ENCODE measurements at regions of chr1 and their contacts with region 1.

Region 1: DNA sequence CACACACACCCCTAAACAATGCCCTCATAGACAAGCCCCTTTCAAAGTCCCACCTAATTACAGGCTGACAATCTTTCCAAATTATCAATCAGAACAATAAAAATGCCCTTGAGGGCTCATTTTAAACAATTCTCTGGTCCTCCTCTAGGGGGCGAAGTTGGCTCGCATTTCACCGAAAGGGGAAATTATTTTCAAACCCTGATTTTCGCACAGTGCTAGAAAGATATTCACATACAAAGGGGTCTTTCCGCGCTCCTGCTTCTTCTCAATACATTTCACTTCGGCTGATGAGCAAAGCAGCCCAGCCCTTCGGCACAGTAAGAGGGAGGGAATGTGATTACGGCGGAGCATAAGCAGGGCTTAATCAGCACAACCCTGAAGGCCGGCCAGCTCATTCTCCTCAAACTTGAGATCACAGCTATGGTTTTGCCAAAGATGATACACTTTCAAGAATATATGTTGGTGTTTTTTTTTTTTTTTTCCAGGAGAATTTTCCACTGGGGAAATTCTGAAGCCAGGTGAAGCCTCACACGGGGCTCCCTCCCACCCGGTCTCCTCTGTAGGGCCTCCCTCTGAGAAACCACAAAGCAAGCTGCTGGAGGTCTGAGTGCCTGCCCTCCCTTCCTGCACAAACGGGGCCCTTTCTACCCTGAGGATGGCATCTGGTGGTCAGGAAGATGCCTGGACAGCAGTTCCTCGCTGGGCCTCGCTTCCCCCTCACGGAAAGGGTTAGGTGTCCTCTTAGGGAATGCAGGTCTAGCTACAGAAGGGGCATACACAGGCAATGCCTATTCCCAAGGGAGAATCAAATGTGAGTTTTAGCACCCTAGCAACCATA is 66.9 kb downstream of the GNG12 start:
- DNase-seq: peak in 1 of 2 donors; percentile 16
- ATAC-seq: peak; percentile 53 to 68
- H3K4me3 ChIP-seq: peak overlapping the region in 3 of 4 donors; percentile 21 to 48 (median 39)
- H3K27ac ChIP-seq: no peak overlapping the region
- H3K4me1 ChIP-seq: peaks cover 0 to 6% of the 10 kb centered on the region in 2 donors
- H3K27me3 ChIP-seq: no peaks in the 10 kb centered on the region
- CTCF ChIP-seq: peak; percentile 64 to 85 (median 75)
- POLR2A ChIP-seq: no peak

Region 2: GRCh38 chr1:68103884-68104554 is 337.7 kb after region 1 on chr1:
- in situ Hi-C with region 1: loop called in 1 of 4 experiments (anchors 10 kb)
- intact Hi-C with region 1: no loop called
- DNase-seq: no peak
- ATAC-seq: peak; percentile 47 to 77
- H3K4me3 ChIP-seq: no peak overlapping the region
- H3K27ac ChIP-seq: no peak overlapping the region
- H3K4me1 ChIP-seq: no peaks in the 10 kb centered on the region
- H3K27me3 ChIP-seq: no peaks in the 10 kb centered on the region
- CTCF ChIP-seq: no peak
- POLR2A ChIP-seq: no peak

Region 3: GRCh38 chr1:68111519-68112436 is 345.4 kb after region 1 on chr1:
- in situ Hi-C with region 1: loop called in 3 of 4 experiments (anchors 10 kb)
- intact Hi-C with region 1: loop called (anchors 2 kb)
- DNase-seq: peak; percentile 46 to 56
- ATAC-seq: peak; percentile 87 to 88
- H3K4me3 ChIP-seq: no peak overlapping the region
- H3K27ac ChIP-seq: no peak overlapping the region
- H3K4me1 ChIP-seq: peaks cover 9 to 10% of the 10 kb centered on the region in 2 donors
- H3K27me3 ChIP-seq: no peaks in the 10 kb centered on the region
- CTCF ChIP-seq: peak in 3 of 5 experiments; percentile 29 to 47 (median 46)
- POLR2A ChIP-seq: no peak

Measured in gastrocnemius medialis (tissue), 4 donors.